ENCODE measurements at regions of chr11 and their contacts with region 1.

Region 1: GRCh38 chr11:6682936-6683861 is at the start of gene MRPL17:
- DNase-seq: peak; percentile 98
- ATAC-seq: peak; percentile 96
- H3K4me3 ChIP-seq: peak within 1 kb of the TSS; percentile 77
- H3K27ac ChIP-seq: peak within 1 kb of the TSS; percentile 86
- H3K4me1 ChIP-seq: peaks cover 5% of the 10 kb centered on the region
- H3K27me3 ChIP-seq: no peaks in the 10 kb centered on the region
- CTCF ChIP-seq: peak; percentile 96
- POLR2A ChIP-seq: peak; percentile 72; the same call in 1 of the 2 replicates
- RAD21 ChIP-seq: peak; percentile 83
- total RNA-seq, gene MRPL17: 65.8 and 70.3 TPM in 2 replicates

Region 2: DNA sequence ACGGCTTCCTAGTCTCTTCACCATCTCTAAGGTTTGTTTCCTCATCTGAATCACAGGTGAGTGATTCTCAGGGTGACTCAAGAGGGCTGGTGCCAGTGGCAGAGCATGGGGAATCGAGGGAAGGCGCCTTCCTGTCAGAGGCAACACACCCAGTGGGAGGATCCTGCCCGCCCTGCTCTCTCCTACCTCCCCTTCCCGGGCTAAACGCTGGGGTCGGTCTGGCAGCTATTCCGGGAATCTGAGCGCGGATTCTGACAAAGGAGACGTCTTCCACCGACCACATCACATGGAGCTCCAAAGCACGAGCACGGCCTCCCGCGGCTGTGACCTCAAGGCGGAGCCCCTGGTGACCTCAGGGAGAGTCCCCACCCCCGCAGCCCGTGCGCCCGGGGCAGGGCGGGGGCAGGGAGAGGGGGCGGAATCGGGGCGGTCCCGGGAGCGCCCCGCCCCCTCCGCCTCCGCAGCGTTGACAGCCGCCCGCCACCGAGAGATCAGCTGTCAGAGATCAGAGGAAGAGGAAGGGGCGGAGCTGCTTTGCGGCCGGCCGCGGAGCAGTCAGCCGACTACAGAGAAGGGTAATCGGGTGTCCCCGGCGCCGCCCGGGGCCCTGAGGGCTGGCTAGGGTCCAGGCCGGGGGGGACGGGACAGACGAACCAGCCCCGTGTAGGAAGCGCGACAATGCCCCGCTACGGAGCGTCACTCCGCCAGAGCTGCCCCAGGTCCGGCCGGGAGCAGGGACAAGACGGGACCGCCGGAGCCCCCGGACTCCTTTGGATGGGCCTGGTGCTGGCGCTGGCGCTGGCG is 293.1 kb before region 1 on chr11 and contains the start of gene SMPD1:
- CTCF ChIA-PET with region 1: no interaction called
- POLR2A ChIA-PET with region 1: no interaction called
- dilution Hi-C with region 1: no loop called
- in situ Hi-C with region 1: loop called (anchors 10 kb)
- intact Hi-C with region 1: no loop called
- DNase-seq: peak; percentile 80
- ATAC-seq: peak; percentile 95
- H3K4me3 ChIP-seq: peak within 1 kb of the TSS; percentile 90
- H3K27ac ChIP-seq: peak within 1 kb of the TSS; percentile 76
- H3K4me1 ChIP-seq: peaks cover 6% of the 10 kb centered on the region
- H3K27me3 ChIP-seq: no peaks in the 10 kb centered on the region
- CTCF ChIP-seq: no peak
- POLR2A ChIP-seq: peak; percentile 65; the same call in 1 of the 2 replicates
- RAD21 ChIP-seq: no peak
- total RNA-seq, gene SMPD1: 17.5 and 19.5 TPM in 2 replicates

Region 3: DNA sequence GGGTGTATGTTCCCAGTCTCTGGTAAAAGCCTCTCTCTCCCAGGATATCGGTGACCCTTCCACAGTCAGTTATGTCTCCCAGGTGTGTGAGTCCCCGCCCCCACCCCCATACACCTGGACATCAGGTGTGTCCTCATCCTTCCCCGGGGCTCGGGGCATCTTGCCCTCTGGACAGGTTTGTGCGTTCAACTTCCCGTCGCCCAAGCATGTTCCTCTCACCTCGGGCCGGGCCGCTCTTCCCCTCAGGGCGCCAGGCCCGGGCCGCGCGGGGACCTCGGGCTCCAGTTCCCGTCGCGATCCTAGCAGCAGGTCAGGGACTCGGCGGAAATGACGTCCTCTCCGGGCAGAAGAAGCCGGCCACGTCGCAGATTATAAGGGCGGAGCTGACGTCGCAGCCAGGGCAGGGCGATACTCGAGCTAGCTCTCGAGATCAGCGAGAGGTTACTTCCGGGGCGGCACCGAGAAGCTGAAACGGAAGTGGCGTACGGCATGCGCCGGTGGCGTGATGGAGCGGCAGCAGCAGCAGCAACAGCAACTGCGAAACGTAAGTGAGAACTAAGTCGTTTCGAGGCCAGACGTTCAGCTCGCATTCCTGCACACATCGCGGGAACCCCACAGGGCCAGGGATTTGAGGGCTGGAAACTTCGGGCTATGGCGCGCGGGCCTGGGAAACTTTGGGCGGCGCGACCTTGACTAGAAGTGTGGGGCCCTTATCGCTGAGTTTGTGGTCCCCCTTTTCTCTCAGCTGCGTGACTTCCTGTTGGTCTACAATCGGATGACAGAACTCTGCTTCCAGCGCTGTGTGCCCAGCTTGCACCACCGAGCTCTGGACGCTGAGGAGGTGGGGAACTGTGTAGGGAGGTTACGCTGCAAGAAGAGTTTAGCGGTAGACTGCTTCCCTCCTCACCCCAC is 201.9 kb before region 1 on chr11 and contains the starts of genes ARFIP2 and TIMM10B:
- CTCF ChIA-PET with region 1: no interaction called
- POLR2A ChIA-PET with region 1: no interaction called
- dilution Hi-C with region 1: no loop called
- in situ Hi-C with region 1: no loop called
- intact Hi-C with region 1: loop called (anchors 5 kb)
- DNase-seq: peak; percentile 98
- ATAC-seq: peak; percentile 96
- H3K4me3 ChIP-seq: peak within 1 kb of the TSS; percentile 82
- H3K27ac ChIP-seq: peak within 1 kb of the TSS; percentile 84
- H3K4me1 ChIP-seq: peaks cover 8% of the 10 kb centered on the region
- H3K27me3 ChIP-seq: no peaks in the 10 kb centered on the region
- CTCF ChIP-seq: no peak
- POLR2A ChIP-seq: peak; percentile 87; the same call in 1 of the 2 replicates
- RAD21 ChIP-seq: no peak; the same call in 1 of the 2 replicates
- total RNA-seq, gene ARFIP2: 76.7 and 84.4 TPM in 2 replicates
- total RNA-seq, gene TIMM10B: 24.7 and 27.5 TPM in 2 replicates

Region 4: GRCh38 chr11:6531267-6531752 is 151.9 kb before region 1 on chr11:
- CTCF ChIA-PET with region 1: interaction called, 14 read pairs
- POLR2A ChIA-PET with region 1: no interaction called
- dilution Hi-C with region 1: no loop called
- in situ Hi-C with region 1: no loop called
- intact Hi-C with region 1: loop called (anchors 1 kb)
- DNase-seq: peak; percentile 52
- ATAC-seq: peak; percentile 95
- H3K4me3 ChIP-seq: no peak overlapping the region
- H3K27ac ChIP-seq: no peak overlapping the region
- H3K4me1 ChIP-seq: no peaks in the 10 kb centered on the region
- H3K27me3 ChIP-seq: no peaks in the 10 kb centered on the region
- CTCF ChIP-seq: peak; percentile 74
- POLR2A ChIP-seq: no peak
- RAD21 ChIP-seq: peak; percentile 83

Region 5: GRCh38 chr11:6603287-6604080 is 79.7 kb before region 1 on chr11 and contains the starts of genes ILK and RRP8:
- CTCF ChIA-PET with region 1: interaction called, 4 read pairs
- POLR2A ChIA-PET with region 1: interaction called, 5 read pairs
- dilution Hi-C with region 1: no loop called
- in situ Hi-C with region 1: no loop called
- intact Hi-C with region 1: loop called (anchors 1 kb)
- DNase-seq: peak; percentile 86
- ATAC-seq: peak; percentile 80
- H3K4me3 ChIP-seq: peak within 1 kb of the TSS; percentile 90
- H3K27ac ChIP-seq: peak within 1 kb of the TSS; percentile 95
- H3K4me1 ChIP-seq: peaks cover 20% of the 10 kb centered on the region
- H3K27me3 ChIP-seq: no peaks in the 10 kb centered on the region
- CTCF ChIP-seq: peak; percentile 27
- POLR2A ChIP-seq: peak; percentile 30; the same call in 1 of the 2 replicates
- RAD21 ChIP-seq: peak; percentile 26
- total RNA-seq, gene ILK: 272 and 339 TPM in 2 replicates
- total RNA-seq, gene RRP8: 11.1 and 11.5 TPM in 2 replicates

Region 6: DNA sequence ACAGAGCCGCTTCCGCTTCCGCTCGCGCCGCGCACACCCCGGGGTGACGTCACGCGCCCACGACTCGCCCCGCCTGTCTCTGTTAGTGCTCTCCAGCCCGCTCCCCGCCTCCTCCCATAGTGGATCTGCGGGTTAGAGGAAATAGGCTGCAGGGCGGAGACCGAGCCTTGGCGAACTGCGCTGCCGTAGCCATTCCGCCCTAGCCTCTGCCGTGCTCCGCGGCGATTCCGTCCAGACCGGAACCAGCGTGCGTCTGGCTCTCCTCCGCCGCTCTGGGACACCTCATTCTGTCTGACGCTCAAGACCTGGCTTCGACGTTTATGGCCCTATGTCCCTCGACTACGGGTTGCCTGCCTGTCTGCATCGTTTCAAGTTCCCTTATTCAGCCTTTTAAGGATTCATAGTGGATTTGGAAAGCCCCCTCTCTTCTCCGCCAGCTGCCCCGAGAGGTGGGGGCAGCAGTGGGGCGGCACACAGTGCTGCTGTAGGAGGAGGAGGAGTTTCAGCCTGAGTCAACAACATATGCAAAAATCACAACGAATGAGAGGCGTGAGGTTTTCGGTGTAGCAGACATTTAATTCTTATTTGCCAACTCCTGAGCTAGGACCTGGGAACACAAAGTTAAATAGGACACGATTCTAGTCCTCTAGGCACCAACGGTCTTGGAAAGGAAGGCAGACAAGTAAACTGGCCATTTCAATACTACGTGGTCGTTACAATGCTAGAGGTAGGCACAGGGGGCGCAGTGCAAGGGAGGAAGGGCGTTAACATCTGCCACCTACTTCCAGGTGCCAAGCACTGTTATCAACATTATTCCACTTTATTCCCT is 70.8 kb before region 1 on chr11 and contains the start of gene TAF10:
- CTCF ChIA-PET with region 1: interaction called, 17 read pairs
- POLR2A ChIA-PET with region 1: interaction called, 5 read pairs
- dilution Hi-C with region 1: no loop called
- in situ Hi-C with region 1: loop called (anchors 5 kb)
- intact Hi-C with region 1: loop called (anchors 1 kb)
- DNase-seq: peak; percentile 96
- ATAC-seq: peak; percentile 91
- H3K4me3 ChIP-seq: peak within 1 kb of the TSS; percentile 67
- H3K27ac ChIP-seq: peak within 1 kb of the TSS; percentile 99
- H3K4me1 ChIP-seq: peaks cover 29% of the 10 kb centered on the region
- H3K27me3 ChIP-seq: no peaks in the 10 kb centered on the region
- CTCF ChIP-seq: peak; percentile 39
- POLR2A ChIP-seq: peak; percentile 89
- RAD21 ChIP-seq: peak; percentile 17
- total RNA-seq, gene TAF10: 18.6 and 24.4 TPM in 2 replicates

Region 7: DNA sequence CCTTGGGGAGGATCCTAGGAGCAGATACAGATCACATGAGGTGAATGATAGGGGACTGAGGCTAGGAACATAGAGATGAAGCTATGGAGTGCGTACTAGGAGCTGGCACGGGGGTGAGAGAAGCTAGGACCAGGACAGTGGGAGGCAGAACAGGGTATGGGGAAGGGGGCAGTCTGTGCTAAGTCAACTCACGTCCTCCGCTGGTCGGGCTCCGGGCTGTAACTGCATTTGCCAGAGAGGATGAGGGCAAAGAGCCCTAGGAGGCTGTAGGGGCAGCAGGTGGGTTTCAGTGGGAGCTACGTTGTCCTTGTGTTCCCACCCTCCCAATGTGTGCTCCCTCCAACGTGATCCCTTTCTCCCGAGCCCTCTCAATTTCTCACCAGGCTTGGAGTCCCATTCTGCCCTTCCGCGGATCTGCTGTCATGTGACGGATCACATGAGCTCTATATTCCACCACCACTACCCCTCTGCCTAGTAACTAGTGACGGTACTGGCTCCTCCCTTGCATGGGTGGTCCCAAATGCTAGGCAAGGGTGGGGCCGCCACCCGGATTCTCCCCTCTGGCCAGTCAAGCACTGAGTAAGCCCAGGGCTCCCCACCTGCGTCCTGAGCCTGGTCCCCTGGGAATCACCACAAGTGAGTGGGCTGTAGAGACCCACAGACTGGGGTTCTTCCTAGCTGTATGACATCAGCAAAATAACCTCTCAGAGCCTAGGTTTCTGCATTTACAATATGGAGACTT is 64.0 kb before region 1 on chr11 and contains the start of gene TPP1:
- CTCF ChIA-PET with region 1: interaction called, 17 read pairs
- POLR2A ChIA-PET with region 1: interaction called, 3 read pairs
- dilution Hi-C with region 1: no loop called
- in situ Hi-C with region 1: loop called (anchors 5 kb)
- intact Hi-C with region 1: loop called (anchors 1 kb)
- DNase-seq: peak; percentile 94
- ATAC-seq: peak; percentile 93
- H3K4me3 ChIP-seq: peak within 1 kb of the TSS; percentile 75
- H3K27ac ChIP-seq: peak within 1 kb of the TSS; percentile 81
- H3K4me1 ChIP-seq: peaks cover 7% of the 10 kb centered on the region
- H3K27me3 ChIP-seq: no peaks in the 10 kb centered on the region
- CTCF ChIP-seq: no peak
- POLR2A ChIP-seq: peak; percentile 68
- RAD21 ChIP-seq: peak; percentile 1; the same call in 1 of the 2 replicates
- total RNA-seq, gene TPP1: 16.7 and 33.5 TPM in 2 replicates